ENCODE measurements at regions of chr6 and their contacts with region 1.

Region 1: DNA sequence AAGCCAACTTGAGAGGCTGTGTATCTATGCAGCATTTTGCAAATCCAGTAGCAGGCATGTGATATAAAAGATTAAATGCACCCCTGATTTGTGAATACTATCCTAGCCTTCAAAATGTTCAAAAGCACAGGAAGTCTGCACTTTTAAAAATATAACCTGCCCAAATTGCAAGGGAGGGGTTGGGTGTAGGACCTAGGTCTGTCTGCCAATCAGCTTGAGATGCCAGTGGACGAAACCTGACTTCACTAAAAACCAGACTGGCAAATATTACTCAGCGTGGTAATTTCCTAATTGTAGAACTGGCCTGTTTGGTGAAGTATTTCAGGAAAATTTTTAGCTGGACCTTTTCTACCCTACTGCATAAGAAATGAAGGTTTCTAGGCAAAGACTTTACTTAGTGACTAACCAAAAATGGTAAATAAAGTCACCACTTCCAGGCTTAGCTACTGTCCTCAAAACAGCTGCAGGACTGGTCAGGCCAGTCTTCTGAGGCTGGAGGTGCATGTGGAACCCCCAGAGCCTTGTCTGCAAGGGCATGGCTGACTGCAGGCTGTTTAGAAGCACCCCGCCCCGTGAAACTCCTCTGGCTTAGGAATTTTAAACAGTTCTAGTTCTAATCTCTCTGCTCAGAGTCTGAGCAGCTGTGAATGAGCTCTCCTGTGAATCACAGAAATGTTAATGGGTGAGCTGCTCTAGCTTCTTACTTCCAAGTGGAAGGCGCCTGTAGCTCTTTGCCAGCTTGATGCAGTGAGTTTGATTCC is 104.5 kb upstream of the ESR1 start:
- DNase-seq: no peak
- H3K4me3 Mint-ChIP-seq: no peak overlapping the region
- H3K27ac Mint-ChIP-seq: no peak overlapping the region
- H3K4me1 Mint-ChIP-seq: peaks cover 25% of the 10 kb centered on the region
- H3K27me3 Mint-ChIP-seq: peaks cover 21% of the 10 kb centered on the region

Region 2: GRCh38 chr6:151690768-151691562 is 12.1 kb before region 1 on chr6:
- intact Hi-C with region 1: loop called (anchors 1 kb)
- DNase-seq: no peak
- H3K4me3 Mint-ChIP-seq: peak overlapping the region; percentile 51
- H3K27ac Mint-ChIP-seq: no peak overlapping the region
- H3K4me1 Mint-ChIP-seq: peaks cover 17% of the 10 kb centered on the region
- H3K27me3 Mint-ChIP-seq: peaks cover 12% of the 10 kb centered on the region

Region 3: GRCh38 chr6:151757506-151758245 is 54.6 kb after region 1 on chr6:
- intact Hi-C with region 1: loop called (anchors 2 kb)
- DNase-seq: peak; percentile 19
- H3K4me3 Mint-ChIP-seq: no peak overlapping the region
- H3K27ac Mint-ChIP-seq: peak overlapping the region; percentile 41
- H3K4me1 Mint-ChIP-seq: peaks cover 33% of the 10 kb centered on the region
- H3K27me3 Mint-ChIP-seq: peaks cover 5% of the 10 kb centered on the region